ENCODE measurements at regions of chr1 and their contacts with region 1.

Region 1: GRCh38 chr1:24562625-24563024 is 6.7 kb downstream of the NCMAP start:
- DNase-seq: no peak
- ATAC-seq: peak in 1 of 4 experiments; percentile 31
- H3K4me3 ChIP-seq: no peak overlapping the region
- H3K4me3 Mint-ChIP-seq: no peak overlapping the region
- H3K27ac ChIP-seq: no peak overlapping the region
- H3K27ac Mint-ChIP-seq: no peak overlapping the region
- H3K4me1 ChIP-seq: no peaks in the 10 kb centered on the region
- H3K4me1 Mint-ChIP-seq: peaks cover 4 to 12% (median 5%) of the 10 kb centered on the region in 3 donors
- H3K27me3 ChIP-seq: peaks cover 0 to 23% of the 10 kb centered on the region in 2 experiments
- H3K27me3 Mint-ChIP-seq: peaks cover 0 to 10% of the 10 kb centered on the region in 2 donors

Region 2: DNA sequence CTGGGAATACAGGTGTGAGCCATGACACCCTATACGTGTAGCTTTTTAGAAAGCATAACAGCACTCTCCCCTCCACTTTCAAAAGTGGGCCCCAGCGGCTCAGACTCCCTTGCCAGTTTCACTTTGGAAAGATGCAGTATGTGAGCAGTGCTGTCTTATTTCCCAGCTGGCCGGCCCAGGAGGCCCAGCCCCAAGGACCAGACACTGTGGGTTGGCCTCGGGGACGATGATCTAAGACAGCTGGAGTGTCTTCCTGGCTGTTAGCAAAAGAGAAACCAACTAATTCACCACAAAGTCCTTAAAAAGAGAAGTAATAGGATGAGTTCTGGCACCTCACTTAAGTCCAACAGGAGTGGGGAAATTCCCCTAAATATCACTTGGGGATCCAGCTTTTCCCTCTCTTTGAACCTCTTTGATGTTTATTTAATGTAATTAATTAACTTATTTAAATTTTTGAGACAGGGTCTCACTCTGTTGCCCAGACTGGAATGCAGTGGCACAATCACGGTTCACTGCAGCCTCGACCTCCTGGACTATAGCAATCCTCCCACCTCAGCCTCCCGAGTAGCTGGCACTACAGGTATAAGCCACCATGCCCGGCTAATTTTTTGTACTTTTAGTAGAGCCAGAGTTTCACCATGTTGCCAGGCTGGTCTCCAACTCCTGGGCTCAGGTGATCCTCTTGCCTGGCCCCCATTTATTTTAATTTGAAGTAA is 165.0 kb after region 1 on chr1:
- CTCF ChIA-PET with region 1: interaction called in 1 of 2 experiments, 12 read pairs
- POLR2A ChIA-PET with region 1: no interaction called
- DNase-seq: peak in 1 of 35 experiments; percentile 34
- ATAC-seq: peak in 1 of 4 experiments; percentile 20
- H3K4me3 ChIP-seq: no peak overlapping the region
- H3K4me3 Mint-ChIP-seq: no peak overlapping the region
- H3K27ac ChIP-seq: no peak overlapping the region
- H3K27ac Mint-ChIP-seq: no peak overlapping the region
- H3K4me1 ChIP-seq: peaks cover 0 to 4% of the 10 kb centered on the region in 2 experiments
- H3K4me1 Mint-ChIP-seq: peaks cover 4 to 10% (median 9%) of the 10 kb centered on the region in 3 donors
- H3K27me3 ChIP-seq: peaks cover 0 to 5% of the 10 kb centered on the region in 2 experiments
- H3K27me3 Mint-ChIP-seq: peaks cover 0 to 3% of the 10 kb centered on the region in 2 donors

Measured in T-cell (primary cell).